ENCODE measurements at regions of chr22 and their contacts with region 1.

Region 1: DNA sequence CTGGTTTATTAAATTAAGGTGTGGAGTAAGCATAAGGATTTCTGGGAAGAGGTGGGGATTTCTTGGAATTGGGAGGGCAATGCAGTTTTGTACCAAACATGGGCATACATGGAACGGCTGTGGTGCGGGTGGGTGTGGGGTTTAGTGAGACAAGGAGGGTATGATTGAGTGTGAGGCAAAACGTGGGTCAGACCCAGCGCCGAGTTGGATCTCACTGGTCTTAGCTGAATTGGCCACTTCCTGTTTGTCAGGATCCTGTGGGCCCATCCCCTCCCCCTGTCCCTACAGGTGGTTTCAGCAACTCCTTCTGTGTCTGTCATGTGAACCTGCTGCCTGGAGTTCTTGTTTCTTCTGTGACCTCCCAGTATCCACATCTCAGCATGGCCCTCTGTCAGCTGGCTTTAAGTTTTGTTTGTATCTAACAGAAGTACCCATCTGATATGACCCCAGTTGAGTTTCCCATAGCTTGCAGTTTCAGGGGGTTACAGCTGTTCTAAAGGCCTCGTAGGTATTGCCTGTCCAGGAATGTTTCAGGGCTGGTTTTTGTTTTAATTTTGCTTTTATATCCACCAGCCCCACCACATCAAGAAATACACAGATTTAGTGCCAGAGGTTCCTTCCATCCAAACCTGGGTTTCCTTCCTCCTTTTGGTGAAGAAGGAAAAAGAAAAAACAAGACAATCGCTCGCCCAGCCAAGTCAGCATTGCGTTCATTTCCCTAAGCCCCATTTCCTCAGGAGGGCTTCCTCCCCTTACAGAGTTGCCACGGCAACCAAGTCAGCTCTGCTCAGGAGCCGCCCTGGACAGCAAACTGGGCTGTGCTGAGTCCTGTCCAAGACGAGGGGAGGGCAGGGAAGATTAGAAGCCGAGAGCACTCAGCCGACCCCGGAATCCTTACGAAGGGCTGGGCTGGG is 6.0 kb downstream of the APOL1 start:
- DNase-seq: peak; percentile 76
- H3K4me3 Mint-ChIP-seq: peak overlapping the region; percentile 17
- H3K27ac Mint-ChIP-seq: peak overlapping the region; percentile 79
- H3K4me1 Mint-ChIP-seq: peaks cover 54% of the 10 kb centered on the region
- H3K27me3 Mint-ChIP-seq: no peaks in the 10 kb centered on the region

Region 2: GRCh38 chr22:36221799-36222751 is 36.9 kb before region 1 on chr22:
- CTCF ChIA-PET with region 1: no interaction called
- POLR2A ChIA-PET with region 1: no interaction called
- intact Hi-C with region 1: loop called (anchors 5 kb)
- DNase-seq: peak; percentile 61
- H3K4me3 Mint-ChIP-seq: no peak overlapping the region
- H3K27ac Mint-ChIP-seq: no peak overlapping the region
- H3K4me1 Mint-ChIP-seq: peaks cover 9% of the 10 kb centered on the region
- H3K27me3 Mint-ChIP-seq: peaks cover 8% of the 10 kb centered on the region

Measured in activated CD4-positive, alpha-beta memory T cell treated with anti-CD3 and anti-CD28 coated beads for 36 hours (primary cell).